B cell (primary cell): ENCODE measurements at regions of chr11 and their contacts with region 1.

Region 1: GRCh38 chr11:13335319-13335718 is 57.7 kb downstream of the BMAL1 start:
- DNase-seq: peak; percentile 68
- ATAC-seq: peak; percentile 68
- H3K4me3 ChIP-seq: no peak overlapping the region
- H3K4me3 Mint-ChIP-seq: no peak overlapping the region
- H3K27ac ChIP-seq: no peak overlapping the region
- H3K27ac Mint-ChIP-seq: no peak overlapping the region
- H3K4me1 ChIP-seq: peaks cover 14 to 17% of the 10 kb centered on the region in 2 donors
- H3K4me1 Mint-ChIP-seq: peaks cover 49% of the 10 kb centered on the region
- H3K27me3 ChIP-seq: no peaks in the 10 kb centered on the region
- H3K27me3 Mint-ChIP-seq: no peaks in the 10 kb centered on the region
- CTCF ChIP-seq: peak; percentile 81

Region 2: DNA sequence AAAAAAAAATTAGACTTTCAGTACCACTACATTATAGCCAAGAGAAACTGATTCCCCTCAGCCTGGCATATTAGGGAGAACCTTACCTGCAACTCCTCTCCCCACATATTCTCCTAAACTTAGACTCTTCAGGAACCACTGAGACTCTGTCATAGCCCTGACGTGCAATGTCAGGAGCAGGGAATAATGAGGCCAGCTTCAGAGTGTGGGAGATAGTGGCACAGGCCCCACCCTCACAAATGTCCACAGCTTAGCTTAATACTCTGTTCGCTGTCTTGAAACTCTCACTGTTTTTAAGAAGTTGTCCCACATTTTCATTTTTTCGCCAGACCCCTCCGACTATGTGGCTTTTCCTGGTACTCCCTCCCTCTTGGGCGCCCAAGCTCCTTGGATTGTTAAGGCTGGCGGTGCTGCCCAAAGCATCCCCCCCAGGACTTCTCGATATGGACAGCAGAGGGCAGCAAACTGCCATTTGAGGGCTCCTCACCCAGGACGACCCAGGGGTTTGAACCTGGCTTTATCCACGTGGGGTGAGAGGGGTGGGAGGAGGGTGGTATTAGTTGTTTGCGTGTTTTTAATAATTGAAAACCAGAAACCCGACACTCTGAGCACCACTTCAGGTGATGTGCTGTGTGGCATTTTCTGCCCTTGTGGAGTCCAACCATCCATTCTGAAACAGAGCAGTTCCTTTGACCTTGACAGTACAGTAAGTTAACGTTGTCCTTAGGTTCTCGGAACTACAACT is 371.4 kb before region 1 on chr11:
- CTCF ChIA-PET with region 1: interaction called, 17 read pairs
- POLR2A ChIA-PET with region 1: no interaction called
- intact Hi-C with region 1: no loop called
- DNase-seq: peak; percentile 56
- ATAC-seq: peak; percentile 31
- H3K4me3 ChIP-seq: no peak overlapping the region
- H3K4me3 Mint-ChIP-seq: no peak overlapping the region
- H3K27ac ChIP-seq: no peak overlapping the region
- H3K27ac Mint-ChIP-seq: no peak overlapping the region
- H3K4me1 ChIP-seq: no peaks in the 10 kb centered on the region
- H3K4me1 Mint-ChIP-seq: no peaks in the 10 kb centered on the region
- H3K27me3 ChIP-seq: no peaks in the 10 kb centered on the region
- H3K27me3 Mint-ChIP-seq: peaks cover 19% of the 10 kb centered on the region
- CTCF ChIP-seq: peak; percentile 76

Region 3: DNA sequence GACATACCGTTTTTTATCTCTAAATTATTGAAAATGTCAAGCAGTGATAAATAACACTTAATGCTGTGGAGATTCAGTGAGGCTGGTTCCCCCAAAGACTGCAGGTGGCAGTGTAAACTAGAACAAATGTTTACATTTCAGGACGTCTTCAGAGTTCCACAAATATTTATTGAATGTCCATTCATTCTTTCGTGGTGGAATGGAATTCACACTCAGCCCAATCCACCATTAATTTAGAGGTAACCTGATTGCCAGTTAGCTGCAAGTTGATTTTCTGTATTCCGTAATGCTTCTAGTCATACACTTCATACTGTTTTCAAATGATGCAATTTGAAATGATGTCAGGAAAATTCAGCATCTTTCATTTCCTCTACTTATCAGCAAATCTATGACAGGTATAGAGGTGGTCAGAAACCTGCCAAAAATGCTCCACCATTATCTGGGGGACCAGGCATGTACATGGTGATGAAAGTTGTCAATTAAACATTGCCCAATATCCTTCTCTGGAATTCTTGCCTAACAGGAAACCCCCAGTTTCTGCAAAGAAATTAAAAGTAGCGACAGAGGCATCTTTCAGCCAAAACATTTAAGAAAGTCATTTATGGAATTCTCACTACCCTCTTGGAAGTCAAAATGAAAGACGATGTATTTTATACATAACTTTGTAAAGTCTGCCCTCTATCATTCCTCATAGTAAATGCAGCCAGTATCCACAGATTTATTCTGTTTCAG is 152.1 kb before region 1 on chr11:
- CTCF ChIA-PET with region 1: interaction called, 8 read pairs
- POLR2A ChIA-PET with region 1: no interaction called
- intact Hi-C with region 1: loop called (anchors 2 kb)
- DNase-seq: peak; percentile 29
- ATAC-seq: no peak
- H3K4me3 ChIP-seq: no peak overlapping the region
- H3K4me3 Mint-ChIP-seq: no peak overlapping the region
- H3K27ac ChIP-seq: no peak overlapping the region
- H3K27ac Mint-ChIP-seq: no peak overlapping the region
- H3K4me1 ChIP-seq: no peaks in the 10 kb centered on the region
- H3K4me1 Mint-ChIP-seq: no peaks in the 10 kb centered on the region
- H3K27me3 ChIP-seq: no peaks in the 10 kb centered on the region
- H3K27me3 Mint-ChIP-seq: peaks cover 8% of the 10 kb centered on the region
- CTCF ChIP-seq: peak; percentile 48

Region 4: GRCh38 chr11:13210424-13210823 is 124.9 kb before region 1 on chr11:
- CTCF ChIA-PET with region 1: interaction called, 14 read pairs
- POLR2A ChIA-PET with region 1: no interaction called
- intact Hi-C with region 1: loop called (anchors 2 kb)
- DNase-seq: peak; percentile 30
- ATAC-seq: no peak
- H3K4me3 ChIP-seq: no peak overlapping the region
- H3K4me3 Mint-ChIP-seq: no peak overlapping the region
- H3K27ac ChIP-seq: no peak overlapping the region
- H3K27ac Mint-ChIP-seq: no peak overlapping the region
- H3K4me1 ChIP-seq: peaks cover 0 to 5% of the 10 kb centered on the region in 2 donors
- H3K4me1 Mint-ChIP-seq: peaks cover 13% of the 10 kb centered on the region
- H3K27me3 ChIP-seq: peaks cover 0 to 5% (median 0%) of the 10 kb centered on the region in 4 experiments
- H3K27me3 Mint-ChIP-seq: peaks cover 26% of the 10 kb centered on the region
- CTCF ChIP-seq: peak; percentile 24

Region 5: DNA sequence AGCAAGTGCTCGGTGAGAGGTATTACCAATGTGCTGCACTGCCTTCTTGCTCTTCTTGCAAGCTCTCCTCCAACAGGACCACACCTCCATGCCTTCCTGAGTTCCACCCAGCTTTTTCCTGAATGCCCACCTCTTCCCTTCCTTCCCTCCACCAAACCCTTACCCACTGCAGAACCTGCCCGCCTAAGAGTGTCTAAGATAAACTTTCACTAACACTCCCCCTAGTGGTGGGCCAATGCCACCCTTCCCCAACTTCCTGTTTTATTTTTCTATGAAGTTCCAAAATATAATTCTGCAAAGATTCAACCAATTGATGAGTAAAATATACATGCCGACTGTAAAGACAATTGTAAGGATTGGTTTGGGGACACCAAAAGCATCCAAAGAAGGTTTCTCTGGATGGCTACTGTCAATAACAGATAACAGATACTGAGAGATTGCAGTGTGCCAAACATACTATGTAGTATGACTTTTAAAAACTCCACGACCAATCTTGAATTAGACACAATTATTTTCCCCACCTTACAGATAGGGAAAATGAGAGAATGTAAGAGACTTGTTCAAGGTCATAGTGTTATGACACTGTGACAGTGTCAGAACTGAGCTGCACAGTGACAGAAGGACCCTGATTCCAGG is 96.3 kb before region 1 on chr11:
- CTCF ChIA-PET with region 1: interaction called, 4 read pairs
- POLR2A ChIA-PET with region 1: no interaction called
- intact Hi-C with region 1: loop called (anchors 10 kb)
- DNase-seq: peak; percentile 67
- ATAC-seq: peak; percentile 47
- H3K4me3 ChIP-seq: no peak overlapping the region
- H3K4me3 Mint-ChIP-seq: no peak overlapping the region
- H3K27ac ChIP-seq: no peak overlapping the region
- H3K27ac Mint-ChIP-seq: no peak overlapping the region
- H3K4me1 ChIP-seq: no peaks in the 10 kb centered on the region
- H3K4me1 Mint-ChIP-seq: no peaks in the 10 kb centered on the region
- H3K27me3 ChIP-seq: peaks cover 0 to 5% (median 2%) of the 10 kb centered on the region in 4 experiments
- H3K27me3 Mint-ChIP-seq: peaks cover 25% of the 10 kb centered on the region
- CTCF ChIP-seq: peak; percentile 94

Region 6: DNA sequence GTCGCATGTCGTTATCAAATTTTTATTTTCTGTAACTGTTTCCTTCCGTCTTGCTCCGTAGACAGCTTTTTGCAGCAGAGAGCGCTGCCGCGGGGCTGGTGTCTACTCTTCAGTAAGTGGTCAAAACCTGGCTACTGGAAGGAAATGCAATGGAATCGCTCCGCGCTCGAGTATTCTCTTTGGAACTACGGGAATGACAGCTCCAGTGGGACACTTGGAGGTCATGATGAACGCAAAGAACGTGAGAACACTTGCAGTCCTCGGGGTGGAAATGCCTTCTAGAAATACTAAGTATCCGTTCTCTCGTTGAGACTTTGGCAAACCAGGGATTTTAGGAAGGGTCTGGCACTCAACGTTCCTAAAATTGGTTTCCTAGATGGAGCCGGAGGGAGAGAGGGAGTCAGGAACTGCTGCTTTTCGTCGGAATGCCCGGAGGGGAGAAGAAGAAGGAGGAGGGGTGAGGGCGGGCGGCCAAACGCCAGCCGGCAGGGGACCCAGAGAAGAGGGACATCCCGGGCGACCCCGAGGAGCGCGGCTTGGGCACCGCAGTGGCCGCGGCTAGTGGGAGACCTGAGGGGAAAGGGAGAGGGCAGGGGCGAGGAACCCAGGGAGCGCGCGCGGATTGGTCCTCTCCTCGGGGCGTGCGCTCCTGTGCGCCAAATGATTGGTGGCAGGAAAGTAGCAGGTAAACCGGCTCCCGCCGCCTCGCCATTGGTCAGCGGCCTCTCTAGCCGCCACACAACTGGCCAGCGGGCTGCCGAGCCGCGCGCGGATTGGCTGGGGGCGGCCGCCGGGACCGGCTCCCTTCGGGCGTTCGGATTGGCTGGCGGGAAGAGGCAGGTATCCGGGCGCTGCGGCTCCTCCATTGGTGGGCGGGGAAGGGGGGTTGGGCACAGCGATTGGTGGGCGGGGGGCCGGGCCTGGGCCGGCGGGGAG is 58.2 kb before region 1 on chr11:
- CTCF ChIA-PET with region 1: interaction called, 10 read pairs
- POLR2A ChIA-PET with region 1: no interaction called
- intact Hi-C with region 1: loop called (anchors 5 kb)
- DNase-seq: peak; percentile 97
- ATAC-seq: peak; percentile 85
- H3K4me3 ChIP-seq: peak overlapping the region; percentile 70 to 94 (median 89)
- H3K4me3 Mint-ChIP-seq: peak overlapping the region; percentile 97
- H3K27ac ChIP-seq: peak overlapping the region; percentile 40 to 46
- H3K27ac Mint-ChIP-seq: peak overlapping the region; percentile 90
- H3K4me1 ChIP-seq: peaks cover 21 to 23% of the 10 kb centered on the region in 2 donors
- H3K4me1 Mint-ChIP-seq: peaks cover 42% of the 10 kb centered on the region
- H3K27me3 ChIP-seq: peaks cover 0 to 20% (median 6%) of the 10 kb centered on the region in 4 experiments
- H3K27me3 Mint-ChIP-seq: peaks cover 17% of the 10 kb centered on the region
- CTCF ChIP-seq: no peak

Region 7: DNA sequence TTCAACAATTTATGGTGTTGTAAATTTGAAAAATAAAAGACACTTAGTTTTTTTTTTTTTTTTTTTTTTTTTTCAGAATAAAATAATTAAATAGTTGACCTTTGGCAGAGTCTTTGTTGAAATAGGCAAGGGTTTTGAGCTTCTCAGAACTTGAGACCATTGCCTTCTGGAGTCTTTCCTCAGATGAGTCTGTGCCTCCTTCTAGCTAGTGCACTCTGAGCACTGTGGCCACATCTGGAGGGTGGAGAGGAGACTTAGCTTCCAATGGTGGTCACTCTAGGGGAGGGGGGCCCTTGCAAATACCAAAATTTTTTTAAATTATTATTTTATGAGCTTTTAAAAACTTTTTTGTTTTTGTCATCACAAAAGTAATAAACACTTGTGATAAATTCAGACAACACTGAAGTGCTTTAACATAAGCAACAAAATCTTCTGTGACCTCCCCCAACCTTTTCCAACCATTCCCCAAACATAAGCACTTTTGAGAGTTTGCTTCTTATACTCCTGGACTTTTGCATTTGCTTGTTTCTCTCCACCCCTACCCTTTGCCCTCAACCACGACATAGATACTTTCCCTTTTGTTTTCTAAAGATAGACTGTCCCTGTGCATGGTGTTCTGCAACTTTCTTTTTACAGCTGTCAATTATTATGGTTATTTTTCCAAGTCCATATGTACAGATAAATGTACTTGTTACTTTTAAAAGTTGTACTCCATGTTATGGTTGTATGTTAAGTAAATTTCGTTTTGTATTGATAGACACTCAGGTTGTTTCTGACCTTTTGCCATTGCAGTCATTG is 16.6 kb before region 1 on chr11:
- CTCF ChIA-PET with region 1: interaction called, 14 read pairs
- POLR2A ChIA-PET with region 1: no interaction called
- intact Hi-C with region 1: no loop called
- DNase-seq: no peak
- ATAC-seq: no peak
- H3K4me3 ChIP-seq: no peak overlapping the region
- H3K4me3 Mint-ChIP-seq: peak overlapping the region; percentile 44
- H3K27ac ChIP-seq: no peak overlapping the region
- H3K27ac Mint-ChIP-seq: no peak overlapping the region
- H3K4me1 ChIP-seq: peaks cover 7 to 11% of the 10 kb centered on the region in 2 donors
- H3K4me1 Mint-ChIP-seq: peaks cover 43% of the 10 kb centered on the region
- H3K27me3 ChIP-seq: no peaks in the 10 kb centered on the region
- H3K27me3 Mint-ChIP-seq: no peaks in the 10 kb centered on the region
- CTCF ChIP-seq: no peak